HEK293T (cell line): ENCODE measurements at regions of chr6 and their contacts with region 1.

Region 1: GRCh38 chr6:111259089-111259831 is 172.0 kb downstream of the SLC16A10 start:
- DNase-seq: peak; percentile 100

Region 2: DNA sequence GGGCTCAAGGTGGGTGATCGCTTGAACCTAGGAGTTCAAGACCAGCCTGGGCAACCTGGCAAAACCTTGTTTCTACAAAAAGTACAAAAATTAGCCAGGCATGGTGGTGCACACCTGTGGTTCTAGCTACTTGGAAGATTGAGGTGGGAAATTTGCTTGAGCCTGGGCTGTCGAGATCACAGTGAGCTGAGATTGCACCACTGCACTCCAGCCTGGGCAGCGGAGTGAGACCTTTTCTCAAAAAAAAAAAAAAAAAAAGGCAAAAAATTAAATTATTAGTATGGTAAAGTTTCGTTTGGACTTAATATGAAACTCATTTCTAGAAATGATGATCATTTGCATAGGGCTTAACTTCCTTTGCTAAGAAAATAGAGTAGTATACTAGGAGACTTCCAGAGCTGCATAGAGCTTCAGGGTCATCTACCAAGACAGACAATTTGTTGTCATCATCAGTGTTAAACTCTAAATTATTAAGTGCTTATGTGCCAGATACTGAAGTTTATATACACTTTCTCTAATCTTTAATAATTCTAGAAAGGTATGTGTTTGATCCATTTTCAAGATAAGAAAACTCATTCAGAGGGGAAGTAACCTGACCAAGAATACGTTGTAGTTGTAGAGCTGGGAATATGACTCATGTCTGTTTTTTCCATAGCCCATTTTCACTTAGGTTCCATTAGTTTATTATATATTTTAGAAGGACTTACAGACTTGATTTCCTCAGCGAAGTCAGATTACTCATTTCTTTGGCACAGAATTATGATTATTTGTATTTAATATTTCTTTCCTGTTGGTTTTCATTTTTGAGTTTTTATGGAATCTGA is 87.5 kb before region 1 on chr6:
- CTCF ChIA-PET with region 1: no interaction called
- POLR2A ChIA-PET with region 1: no interaction called
- DNase-seq: no peak

Region 3: GRCh38 chr6:111478749-111479148 is 219.5 kb after region 1 on chr6:
- CTCF ChIA-PET with region 1: interaction called, 7 read pairs
- POLR2A ChIA-PET with region 1: interaction called, 20 read pairs
- DNase-seq: no peak

Region 4: GRCh38 chr6:111483736-111484632 is 224.7 kb after region 1 on chr6:
- CTCF ChIA-PET with region 1: interaction called, 7 read pairs
- POLR2A ChIA-PET with region 1: interaction called, 20 read pairs
- DNase-seq: peak; percentile 89

Region 5: DNA sequence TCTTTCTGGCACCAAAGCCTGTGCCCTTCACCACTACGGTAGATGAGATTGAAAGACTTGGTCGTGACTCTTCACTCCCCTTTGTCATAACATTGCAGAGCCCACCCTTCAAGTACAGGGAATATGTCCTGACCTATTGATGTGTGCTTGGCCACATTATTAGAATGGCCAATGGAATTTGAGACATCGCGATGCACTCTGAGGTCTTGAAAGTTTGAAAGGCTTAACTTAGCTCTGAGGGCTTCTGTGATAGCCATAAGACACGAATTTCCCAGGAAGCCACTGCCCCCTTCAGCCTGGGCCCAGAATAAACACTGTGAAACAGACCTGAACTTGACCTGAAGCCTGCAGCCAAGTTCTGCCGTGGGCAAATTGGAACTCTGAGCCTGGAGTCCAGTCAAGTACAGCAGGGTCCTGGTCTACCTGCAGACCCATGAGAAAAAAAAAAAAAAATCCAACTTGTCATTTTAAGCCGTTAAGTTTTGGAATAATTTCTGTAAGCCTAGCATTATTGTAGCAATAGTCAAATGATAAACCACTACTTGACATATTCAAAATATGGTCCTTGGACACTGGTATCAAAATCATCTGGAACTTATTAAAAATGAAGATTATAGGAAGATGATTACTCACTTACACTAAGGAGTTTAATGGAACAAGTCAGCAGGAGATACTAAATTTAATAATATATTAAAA is 383.4 kb after region 1 on chr6:
- CTCF ChIA-PET with region 1: interaction called, 15 read pairs
- POLR2A ChIA-PET with region 1: no interaction called
- DNase-seq: peak; percentile 83